Activated T-helper 1 cell treated with anti-CD3 and anti-CD28 coated beads, Interleukin-12 subunit alpha, Interleukin-12 subunit beta, Interleukin-2, Interleukin-4 antibody, amounts not matched to agents 30 ng/mL and 10 ng/mL and 1 ng/mL, durations not matched to agents 14 hours and 24 hours and 36 hours (primary cell): ENCODE measurements at regions of chr6 and their contacts with region 1.

Region 1: GRCh38 chr6:122399384-122400158 is at the start of gene HSF2:
- DNase-seq: peak; percentile 91
- H3K4me3 Mint-ChIP-seq: peak within 1 kb of the TSS; percentile 98
- H3K27ac Mint-ChIP-seq: peak within 1 kb of the TSS; percentile 98
- H3K4me1 Mint-ChIP-seq: peaks cover 41% of the 10 kb centered on the region
- H3K27me3 Mint-ChIP-seq: no peaks in the 10 kb centered on the region
- total RNA-seq, gene HSF2: 14.7 and 15.3 TPM in 2 replicates

Region 2: GRCh38 chr6:122381497-122382265 is 17.9 kb before region 1 on chr6:
- intact Hi-C with region 1: loop called (anchors 1 kb)
- DNase-seq: peak; percentile 38
- H3K4me3 Mint-ChIP-seq: no peak overlapping the region
- H3K27ac Mint-ChIP-seq: no peak overlapping the region
- H3K4me1 Mint-ChIP-seq: no peaks in the 10 kb centered on the region
- H3K27me3 Mint-ChIP-seq: peaks cover 14% of the 10 kb centered on the region

Region 3: GRCh38 chr6:122422614-122423267 is 23.2 kb after region 1 on chr6:
- intact Hi-C with region 1: loop called (anchors 1 kb)
- DNase-seq: no peak
- H3K4me3 Mint-ChIP-seq: no peak overlapping the region
- H3K27ac Mint-ChIP-seq: no peak overlapping the region
- H3K4me1 Mint-ChIP-seq: peaks cover 14% of the 10 kb centered on the region
- H3K27me3 Mint-ChIP-seq: no peaks in the 10 kb centered on the region

Region 4: DNA sequence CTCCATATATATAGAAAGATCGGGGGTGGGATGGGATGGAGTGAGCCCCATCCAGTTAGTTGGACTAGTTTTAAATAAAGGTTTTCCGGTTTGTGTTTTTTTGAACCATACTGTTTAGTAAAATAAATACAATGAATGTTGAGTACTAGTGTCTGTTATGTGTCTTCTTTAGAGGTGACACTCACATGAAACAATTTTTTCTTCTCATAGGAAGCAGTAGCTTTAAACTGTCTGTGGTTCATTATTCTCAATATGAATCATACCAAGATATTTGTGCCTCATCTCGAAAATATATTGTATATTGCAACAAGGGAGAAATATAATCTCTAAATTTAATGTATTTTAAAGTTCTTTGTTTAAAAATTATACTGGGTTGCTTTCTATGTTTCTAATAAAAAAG is 33.2 kb after region 1 on chr6:
- intact Hi-C with region 1: no loop called
- DNase-seq: no peak
- H3K4me3 Mint-ChIP-seq: no peak overlapping the region
- H3K27ac Mint-ChIP-seq: no peak overlapping the region
- H3K4me1 Mint-ChIP-seq: no peaks in the 10 kb centered on the region
- H3K27me3 Mint-ChIP-seq: no peaks in the 10 kb centered on the region

Region 5: GRCh38 chr6:122609856-122610689 is 210.5 kb after region 1 on chr6 and contains the start of gene PKIB:
- intact Hi-C with region 1: loop called (anchors 5 kb)
- DNase-seq: peak; percentile 26
- H3K4me3 Mint-ChIP-seq: peak within 1 kb of the TSS; percentile 81
- H3K27ac Mint-ChIP-seq: no peak within 1 kb of the TSS
- H3K4me1 Mint-ChIP-seq: peaks cover 19% of the 10 kb centered on the region
- H3K27me3 Mint-ChIP-seq: peaks cover 23% of the 10 kb centered on the region
- total RNA-seq, gene PKIB: 0.44 TPM in 1 of 2 replicates, not detected in the other

Region 6: GRCh38 chr6:122673343-122673961 is 273.9 kb after region 1 on chr6:
- intact Hi-C with region 1: no loop called
- DNase-seq: no peak
- H3K4me3 Mint-ChIP-seq: no peak overlapping the region
- H3K27ac Mint-ChIP-seq: no peak overlapping the region
- H3K4me1 Mint-ChIP-seq: no peaks in the 10 kb centered on the region
- H3K27me3 Mint-ChIP-seq: no peaks in the 10 kb centered on the region